ENCODE measurements at regions of chr15 and their contacts with region 1.

Region 1: DNA sequence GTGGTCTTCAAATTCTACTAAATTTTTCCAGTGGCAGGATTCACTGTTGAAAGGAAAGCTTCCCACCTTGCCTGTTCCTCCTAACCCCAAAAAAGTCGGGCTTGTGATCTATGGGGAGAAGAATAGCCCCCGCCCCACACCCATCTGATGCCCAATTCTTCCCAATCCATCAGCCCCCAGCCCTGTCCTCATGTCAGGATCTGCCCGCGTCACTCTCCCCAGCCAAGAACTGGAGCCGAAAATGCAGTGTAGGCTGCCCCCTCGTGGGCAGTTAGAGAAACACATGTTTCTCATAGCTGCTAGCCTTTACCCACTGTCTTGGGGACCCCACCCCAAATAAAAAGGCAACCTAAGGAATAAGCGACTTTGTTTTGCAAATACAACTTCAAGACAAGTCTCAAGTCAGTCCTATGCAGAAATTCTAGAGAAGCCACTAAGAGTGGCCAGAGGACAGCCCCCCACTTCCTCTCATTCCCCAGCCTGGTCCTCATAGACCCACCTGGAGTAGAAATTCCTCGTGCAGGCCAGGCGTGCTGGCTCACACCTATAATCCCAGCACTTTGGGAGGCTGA is 13.0 kb upstream of the CSK start:
- DNase-seq: peak in 1 of 2 experiments; percentile 82
- H3K4me3 ChIP-seq: peak overlapping the region in 1 of 4 experiments; percentile 40; a peak in 1 of 8 replicates
- H3K27ac ChIP-seq: no peak overlapping the region
- H3K4me1 ChIP-seq: peaks cover 0 to 10% (median 0%) of the 10 kb centered on the region in 4 experiments; a peak in 4 of 7 replicates
- H3K27me3 ChIP-seq: no peaks in the 10 kb centered on the region
- CTCF ChIP-seq: peak; percentile 67 to 92 (median 83)
- EP300 ChIP-seq: no peak
- POLR2A ChIP-seq: no peak
- RAD21 ChIP-seq: peak; percentile 88 to 93

Region 2: DNA sequence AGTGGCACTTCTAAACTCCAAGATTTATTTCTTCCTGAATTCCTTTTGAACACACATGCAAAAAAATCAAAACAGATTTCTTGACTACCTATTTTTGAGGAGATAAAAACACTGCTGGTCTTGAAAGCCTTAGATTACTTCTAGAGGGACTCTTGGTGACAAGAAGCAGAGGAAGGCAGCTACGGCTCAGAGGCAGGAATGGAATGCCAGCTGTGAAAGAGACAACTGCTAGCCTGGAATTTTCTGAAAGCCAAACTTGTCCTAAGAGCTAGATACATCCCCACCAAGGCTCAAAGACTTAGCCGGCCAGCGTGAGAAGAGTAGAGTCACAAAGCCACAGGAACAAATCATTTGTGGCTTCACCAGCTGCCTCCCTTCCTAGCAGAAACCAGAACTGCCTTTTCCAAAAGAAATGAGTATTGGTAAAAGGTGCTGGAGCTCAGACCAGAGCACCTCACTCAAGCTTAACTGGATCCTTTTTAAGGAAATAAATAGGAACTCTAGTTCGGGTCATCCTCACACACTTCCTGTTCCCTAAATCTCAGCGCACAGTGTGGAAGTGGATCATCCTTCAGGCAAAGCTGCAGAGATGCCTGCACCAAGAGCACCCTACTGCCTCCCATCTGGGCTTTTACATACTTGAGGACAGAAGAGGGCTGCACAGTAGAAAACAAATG is 120.6 kb before region 1 on chr15:
- CTCF ChIA-PET with region 1: interaction called, 1,439 read pairs
- POLR2A ChIA-PET with region 1: no interaction called
- DNase-seq: no peak
- H3K4me3 ChIP-seq: no peak overlapping the region
- H3K27ac ChIP-seq: no peak overlapping the region
- H3K4me1 ChIP-seq: peaks cover 0 to 4% (median 2%) of the 10 kb centered on the region in 4 experiments; a peak in 4 of 7 replicates
- H3K27me3 ChIP-seq: no peaks in the 10 kb centered on the region
- CTCF ChIP-seq: no peak
- EP300 ChIP-seq: no peak
- POLR2A ChIP-seq: no peak
- RAD21 ChIP-seq: no peak

Region 3: DNA sequence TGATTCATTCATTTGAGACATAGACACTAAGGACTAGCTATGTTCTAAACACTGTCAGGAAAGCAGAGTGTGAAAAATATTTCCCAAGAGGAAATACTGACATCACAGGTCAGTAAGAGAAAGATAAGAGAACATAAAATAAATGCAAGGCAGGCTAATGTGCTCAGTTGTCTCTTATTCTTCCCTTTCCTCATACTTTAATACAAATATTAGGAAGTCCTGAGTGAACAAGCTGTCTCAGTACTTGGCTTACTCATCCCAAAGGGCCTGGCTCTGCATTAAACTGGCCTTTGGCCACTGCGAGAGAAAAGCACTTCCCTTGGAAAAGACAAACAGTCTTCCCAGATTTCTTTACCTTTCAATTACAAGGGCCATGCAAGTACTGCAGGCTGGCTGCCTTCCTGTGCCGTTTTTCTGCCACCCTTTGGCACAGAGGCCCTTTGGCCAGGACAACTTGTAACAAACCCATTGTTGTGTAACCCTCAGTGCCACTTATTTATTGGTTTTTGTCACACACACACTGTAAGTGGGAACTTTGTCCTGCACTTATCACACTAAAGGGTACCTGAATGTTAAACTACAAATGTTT is 104.7 kb before region 1 on chr15:
- CTCF ChIA-PET with region 1: interaction called, 14 read pairs
- POLR2A ChIA-PET with region 1: no interaction called
- DNase-seq: no peak
- H3K4me3 ChIP-seq: no peak overlapping the region
- H3K27ac ChIP-seq: no peak overlapping the region
- H3K4me1 ChIP-seq: 0 out of 7 replicates have a peak, but pooled peaks cover 0 to 2% (median 0%) of the 10 kb centered on the region in 4 experiments
- H3K27me3 ChIP-seq: no peaks in the 10 kb centered on the region
- CTCF ChIP-seq: no peak
- EP300 ChIP-seq: no peak
- POLR2A ChIP-seq: no peak
- RAD21 ChIP-seq: no peak

Region 4: DNA sequence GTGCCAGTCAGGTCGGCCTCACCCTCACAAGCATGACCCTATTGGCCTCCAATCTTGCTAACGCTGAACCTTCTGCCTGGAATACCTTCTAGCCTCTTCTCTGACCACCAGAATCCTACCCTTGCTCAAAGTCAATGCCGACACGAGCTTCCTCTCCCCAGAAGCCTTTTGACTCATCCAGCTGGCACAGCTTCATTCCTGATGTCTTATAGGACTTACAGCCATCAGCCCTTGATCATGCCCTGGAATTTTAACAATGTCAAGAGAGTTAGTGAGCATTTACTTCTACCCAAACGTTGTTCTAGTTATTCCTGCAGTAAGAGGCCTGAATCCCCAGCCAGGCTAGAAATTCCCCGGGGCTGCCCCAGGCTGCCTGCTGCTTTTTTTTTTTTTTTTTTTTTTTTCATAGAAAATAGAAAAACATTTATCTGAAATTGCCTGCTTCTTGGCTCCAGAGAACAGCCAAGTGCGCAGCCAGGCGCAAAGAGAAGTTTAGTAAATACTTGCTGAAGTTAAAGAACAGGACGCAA is 16.3 kb before region 1 on chr15:
- CTCF ChIA-PET with region 1: interaction called, 69 read pairs
- POLR2A ChIA-PET with region 1: interaction called, 6 read pairs
- DNase-seq: no peak
- H3K4me3 ChIP-seq: no peak overlapping the region
- H3K27ac ChIP-seq: no peak overlapping the region
- H3K4me1 ChIP-seq: peaks cover 0 to 4% (median 0%) of the 10 kb centered on the region in 4 experiments; a peak in 2 of 7 replicates
- H3K27me3 ChIP-seq: peaks cover 0 to 4% (median 2%) of the 10 kb centered on the region in 4 experiments; a peak in 2 of 7 replicates
- CTCF ChIP-seq: no peak
- EP300 ChIP-seq: no peak
- POLR2A ChIP-seq: no peak
- RAD21 ChIP-seq: no peak

Region 5: GRCh38 chr15:74808073-74808755 is 39.4 kb after region 1 on chr15:
- CTCF ChIA-PET with region 1: interaction called, 113 read pairs
- POLR2A ChIA-PET with region 1: no interaction called
- DNase-seq: no peak
- H3K4me3 ChIP-seq: no peak overlapping the region
- H3K27ac ChIP-seq: no peak overlapping the region
- H3K4me1 ChIP-seq: peaks cover 0 to 2% (median 1%) of the 10 kb centered on the region in 4 experiments; a peak in 2 of 7 replicates
- H3K27me3 ChIP-seq: no peaks in the 10 kb centered on the region
- CTCF ChIP-seq: no peak
- EP300 ChIP-seq: no peak
- POLR2A ChIP-seq: no peak
- RAD21 ChIP-seq: no peak

Region 6: DNA sequence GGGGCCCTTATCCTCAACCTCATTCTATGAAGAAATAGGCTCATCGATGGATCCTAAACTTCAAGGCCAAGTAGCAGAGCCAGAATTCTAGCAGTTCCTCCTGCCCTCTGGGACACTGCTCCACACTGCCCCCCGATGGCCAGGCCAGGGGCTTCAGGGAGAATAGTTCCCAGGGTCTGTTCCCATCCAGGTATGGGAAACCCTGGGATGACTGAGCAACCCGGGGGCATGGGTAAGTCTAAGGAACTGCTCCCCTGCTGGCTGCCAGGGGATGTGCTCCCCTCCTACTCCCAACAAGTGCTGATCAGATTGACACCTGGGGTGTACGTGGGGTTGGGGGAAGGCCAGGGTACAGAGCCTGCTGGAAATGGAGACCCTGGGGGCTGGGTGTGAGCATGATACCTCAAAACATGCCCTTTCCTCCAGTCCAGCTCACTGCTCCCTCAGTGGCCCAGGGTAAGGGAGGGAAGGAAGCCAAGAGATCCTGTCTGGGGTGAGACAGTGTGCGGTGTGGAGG is 66.5 kb after region 1 on chr15:
- CTCF ChIA-PET with region 1: interaction called, 135 read pairs
- POLR2A ChIA-PET with region 1: interaction called, 5 read pairs
- DNase-seq: peak; percentile 82 to 98
- H3K4me3 ChIP-seq: no peak overlapping the region
- H3K27ac ChIP-seq: peak overlapping the region; percentile 47; the same call in 1 of the 2 replicates
- H3K4me1 ChIP-seq: peaks cover 0 to 4% (median 2%) of the 10 kb centered on the region in 4 experiments; a peak in 4 of 7 replicates
- H3K27me3 ChIP-seq: no peaks in the 10 kb centered on the region; a peak in 1 of 7 replicates
- CTCF ChIP-seq: peak; percentile 73 to 98 (median 97)
- EP300 ChIP-seq: peak in 1 of 2 experiments; percentile 35; a peak in 1 of 3 replicates
- POLR2A ChIP-seq: no peak
- RAD21 ChIP-seq: peak; percentile 62 to 76

Region 7: DNA sequence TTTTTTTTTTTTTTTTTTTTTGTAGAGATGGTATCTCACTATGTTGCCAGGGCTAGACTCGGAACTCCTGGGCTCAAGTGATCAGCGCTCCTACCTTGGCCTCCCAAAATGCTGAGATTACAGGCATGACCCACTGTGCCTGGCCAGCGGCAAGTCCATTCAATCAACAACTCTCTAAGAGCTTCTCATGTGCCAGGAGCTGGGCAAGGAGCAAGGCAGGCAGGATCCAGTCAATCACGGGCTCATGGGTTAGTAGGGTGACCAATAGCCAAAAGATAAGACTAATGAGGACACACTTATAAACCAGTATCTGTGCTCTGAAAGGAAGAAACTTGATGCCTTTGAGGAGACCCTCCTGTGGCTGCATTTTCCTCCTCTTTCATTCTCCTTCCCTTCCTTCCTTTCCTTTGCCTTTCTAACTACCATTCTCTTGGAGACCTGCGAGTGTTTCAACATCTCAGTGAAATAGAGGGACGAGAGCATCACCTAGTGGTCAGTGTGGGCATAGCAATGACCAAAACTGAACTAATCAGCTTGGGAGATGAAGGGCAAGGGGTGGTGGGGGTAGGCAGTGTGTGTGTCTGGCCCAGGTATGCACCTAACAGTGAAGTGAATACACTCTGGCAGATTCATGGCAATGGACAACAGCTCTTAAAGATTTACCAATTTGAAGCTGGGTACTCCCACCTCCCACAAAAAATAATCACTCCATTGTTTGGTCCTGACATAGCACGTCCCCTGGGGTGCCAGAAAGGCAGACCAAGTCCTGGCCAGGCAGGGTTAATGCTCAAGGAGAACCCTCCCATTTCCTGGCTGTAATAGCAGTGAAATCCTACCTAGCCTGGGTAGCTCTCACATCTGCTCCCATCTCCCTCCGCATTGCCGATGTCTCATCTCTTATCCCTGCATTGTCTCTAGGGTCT is 181.5 kb after region 1 on chr15:
- CTCF ChIA-PET with region 1: interaction called, 23 read pairs
- POLR2A ChIA-PET with region 1: no interaction called
- DNase-seq: peak in 1 of 2 experiments; percentile 97
- H3K4me3 ChIP-seq: no peak overlapping the region
- H3K27ac ChIP-seq: no peak overlapping the region
- H3K4me1 ChIP-seq: peaks cover 3 to 19% (median 9%) of the 10 kb centered on the region in 4 experiments
- H3K27me3 ChIP-seq: peaks cover 0 to 6% (median 4%) of the 10 kb centered on the region in 4 experiments; a peak in 5 of 7 replicates
- CTCF ChIP-seq: peak; percentile 77 to 100 (median 90)
- EP300 ChIP-seq: no peak
- POLR2A ChIP-seq: no peak
- RAD21 ChIP-seq: peak; percentile 93

Measured in H1 (cell line).